ENCODE measurements at regions of chr1 and their contacts with region 1.

Region 1: GRCh38 chr1:27392096-27392777 is at the start of gene GPR3:
- DNase-seq: peak; percentile 98 to 100 (median 99)
- ATAC-seq: peak; percentile 94
- H3K4me3 ChIP-seq: peak within 1 kb of the TSS; percentile 96
- H3K27ac ChIP-seq: peak within 1 kb of the TSS; percentile 88
- H3K4me1 ChIP-seq: peaks cover 8 to 44% of the 10 kb centered on the region in 2 experiments
- H3K27me3 ChIP-seq: no peaks in the 10 kb centered on the region
- CTCF ChIP-seq: peak; percentile 68 to 89 (median 84)
- EP300 ChIP-seq: peak; percentile 54; the same call in 1 of the 2 replicates
- POLR2A ChIP-seq: peak; percentile 70
- RAD21 ChIP-seq: peak; percentile 45 to 60
- polyA plus RNA-seq, gene GPR3: 0.24 to 0.59 TPM

Region 2: DNA sequence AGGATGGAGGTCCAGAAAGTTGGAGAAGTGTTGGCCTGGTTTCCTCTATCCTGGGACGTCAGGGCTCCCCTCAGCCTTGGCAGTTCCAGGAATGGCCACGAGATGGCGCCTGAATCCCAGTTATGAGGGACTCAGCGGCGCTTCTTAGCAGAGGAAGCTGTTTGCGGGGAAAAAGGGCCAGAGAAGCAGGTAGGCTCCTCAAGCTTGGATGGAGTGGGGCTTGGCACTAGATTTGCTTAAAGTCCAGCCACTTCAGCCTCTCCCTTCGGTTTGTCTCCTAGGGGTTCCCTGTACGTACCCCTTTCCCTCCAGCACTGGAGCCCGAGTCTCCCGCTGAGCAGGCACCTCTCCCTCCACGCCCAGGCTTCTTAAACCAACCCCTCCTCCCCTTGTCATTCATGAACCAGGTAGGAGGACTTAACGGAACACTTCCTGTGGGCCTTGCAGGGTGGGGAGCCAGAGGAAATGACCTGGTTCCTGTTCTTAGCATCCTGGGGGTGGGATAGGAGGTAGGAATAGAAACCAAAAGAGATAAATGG is 347.6 kb before region 1 on chr1:
- CTCF ChIA-PET with region 1: interaction called, 12 read pairs
- POLR2A ChIA-PET with region 1: interaction called, 3 read pairs
- in situ Hi-C with region 1: no loop called
- intact Hi-C with region 1: loop called (anchors 5 kb)
- DNase-seq: peak; percentile 84 to 91 (median 89)
- ATAC-seq: peak; percentile 93
- H3K4me3 ChIP-seq: no peak overlapping the region
- H3K27ac ChIP-seq: no peak overlapping the region
- H3K4me1 ChIP-seq: peaks cover 3 to 5% of the 10 kb centered on the region in 2 experiments; a peak in 2 of 5 replicates
- H3K27me3 ChIP-seq: peaks cover 0 to 5% of the 10 kb centered on the region in 2 experiments; a peak in 1 of 5 replicates
- CTCF ChIP-seq: peak; percentile 97 to 99 (median 98)
- EP300 ChIP-seq: no peak
- POLR2A ChIP-seq: no peak
- RAD21 ChIP-seq: peak; percentile 97 to 100

Region 3: DNA sequence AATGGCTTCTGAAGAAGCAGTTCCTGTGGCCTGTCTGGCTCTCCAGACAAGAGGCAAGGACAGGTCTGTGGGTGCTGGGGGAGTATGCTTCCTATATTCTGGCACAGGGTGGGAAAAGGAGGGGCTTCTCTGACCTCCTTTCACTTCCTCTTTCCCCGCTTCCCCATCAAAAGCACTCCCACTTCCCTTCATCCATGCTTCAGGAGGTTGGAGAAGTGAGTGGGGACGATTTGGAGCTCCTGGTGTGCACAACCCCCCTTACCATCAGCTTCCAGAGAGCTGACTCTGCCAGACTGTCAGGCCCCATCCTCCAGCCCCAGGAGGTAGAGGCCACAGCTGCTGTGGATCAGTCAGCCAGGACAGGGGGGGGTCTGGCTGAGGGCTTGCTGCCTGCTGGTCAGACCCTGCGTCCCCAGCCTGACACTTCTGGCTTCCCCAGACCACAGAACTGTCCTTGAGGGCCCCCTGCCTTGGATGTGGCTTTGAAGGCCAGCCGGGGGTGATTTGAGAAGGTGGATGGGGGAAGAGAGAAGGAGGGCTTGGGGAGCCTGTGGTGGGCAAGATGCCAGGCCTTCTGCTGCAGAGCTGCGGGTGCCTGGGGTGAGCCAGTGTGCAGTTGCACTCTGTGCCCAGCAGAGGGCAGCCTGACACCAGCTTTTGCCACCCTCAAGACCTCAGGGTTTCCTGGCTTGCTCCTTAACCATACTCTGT is 91.7 kb before region 1 on chr1:
- CTCF ChIA-PET with region 1: interaction called, 49 read pairs
- POLR2A ChIA-PET with region 1: interaction called, 10 read pairs
- in situ Hi-C with region 1: loop called (anchors 5 kb)
- intact Hi-C with region 1: loop called (anchors 1 kb)
- DNase-seq: peak; percentile 88 to 93 (median 90)
- ATAC-seq: peak; percentile 95
- H3K4me3 ChIP-seq: no peak overlapping the region
- H3K27ac ChIP-seq: no peak overlapping the region
- H3K4me1 ChIP-seq: peaks cover 0 to 7% of the 10 kb centered on the region in 2 experiments; a peak in 2 of 5 replicates
- H3K27me3 ChIP-seq: no peaks in the 10 kb centered on the region
- CTCF ChIP-seq: peak; percentile 97 to 99 (median 98)
- EP300 ChIP-seq: no peak
- POLR2A ChIP-seq: no peak
- RAD21 ChIP-seq: peak; percentile 93 to 98

Region 4: DNA sequence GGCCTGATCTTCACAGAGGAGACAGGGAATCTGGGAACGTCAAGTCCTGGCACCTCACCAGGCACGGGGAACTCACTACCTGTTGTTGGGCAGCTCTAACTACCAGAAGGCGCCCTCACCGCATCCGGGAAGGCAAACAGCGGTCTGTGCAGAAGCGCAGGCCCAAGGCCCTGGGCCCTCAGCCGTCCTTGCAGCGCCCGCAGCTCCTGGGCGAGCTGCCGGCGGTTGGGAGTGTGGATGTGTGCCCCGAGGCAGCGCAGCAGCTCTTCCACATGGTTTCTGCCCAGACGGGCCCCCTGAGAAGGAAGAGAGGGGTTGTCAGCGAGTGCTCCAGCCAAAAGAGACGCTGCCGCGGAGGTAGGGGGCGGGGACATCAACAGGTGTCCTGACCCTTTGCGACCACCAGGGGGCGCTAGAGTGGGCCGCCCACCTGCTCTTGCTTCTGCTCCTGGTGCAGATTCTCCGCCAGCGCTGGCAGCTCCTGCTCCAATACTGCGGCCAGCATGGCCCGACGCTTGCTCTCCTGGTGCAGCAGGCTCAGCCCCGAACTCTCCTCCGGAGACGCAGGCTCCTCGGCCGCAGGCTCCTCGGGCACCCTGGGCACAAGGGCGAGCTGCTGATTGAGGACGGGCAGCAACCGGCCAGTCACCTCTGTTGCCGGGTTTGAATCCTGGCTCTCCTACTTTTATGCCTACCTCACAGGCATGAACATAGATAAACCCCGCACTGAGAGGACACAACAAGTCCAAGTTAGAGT is 34.8 kb before region 1 on chr1:
- CTCF ChIA-PET with region 1: interaction called, 5 read pairs
- POLR2A ChIA-PET with region 1: no interaction called
- in situ Hi-C with region 1: no loop called
- intact Hi-C with region 1: loop called (anchors 5 kb)
- DNase-seq: peak; percentile 85 to 94 (median 90)
- ATAC-seq: peak; percentile 90
- H3K4me3 ChIP-seq: no peak overlapping the region
- H3K27ac ChIP-seq: no peak overlapping the region
- H3K4me1 ChIP-seq: peaks cover 9 to 53% of the 10 kb centered on the region in 2 experiments
- H3K27me3 ChIP-seq: no peaks in the 10 kb centered on the region
- CTCF ChIP-seq: peak; percentile 95 to 98 (median 96)
- EP300 ChIP-seq: no peak
- POLR2A ChIP-seq: no peak
- RAD21 ChIP-seq: peak; percentile 61 to 84

Region 5: GRCh38 chr1:27372808-27373690 is 19.2 kb before region 1 on chr1:
- CTCF ChIA-PET with region 1: no interaction called
- POLR2A ChIA-PET with region 1: no interaction called
- in situ Hi-C with region 1: no loop called
- intact Hi-C with region 1: no loop called
- DNase-seq: peak; percentile 71 to 78 (median 72)
- ATAC-seq: peak; percentile 87
- H3K4me3 ChIP-seq: no peak overlapping the region
- H3K27ac ChIP-seq: no peak overlapping the region
- H3K4me1 ChIP-seq: peaks cover 7 to 26% of the 10 kb centered on the region in 2 experiments; a peak in 4 of 5 replicates
- H3K27me3 ChIP-seq: no peaks in the 10 kb centered on the region
- CTCF ChIP-seq: peak; percentile 60 to 81 (median 77)
- EP300 ChIP-seq: no peak
- POLR2A ChIP-seq: no peak
- RAD21 ChIP-seq: no peak

Region 6: GRCh38 chr1:27662707-27663393 is 270.6 kb after region 1 on chr1:
- CTCF ChIA-PET with region 1: interaction called, 3 read pairs
- POLR2A ChIA-PET with region 1: no interaction called
- in situ Hi-C with region 1: loop called (anchors 5 kb)
- intact Hi-C with region 1: loop called (anchors 2 kb)
- DNase-seq: peak; percentile 75 to 91 (median 82)
- ATAC-seq: peak; percentile 76
- H3K4me3 ChIP-seq: no peak overlapping the region
- H3K27ac ChIP-seq: peak overlapping the region; percentile 30; the same call in 2 of the 3 replicates
- H3K4me1 ChIP-seq: peaks cover 27 to 39% of the 10 kb centered on the region in 2 experiments
- H3K27me3 ChIP-seq: no peaks in the 10 kb centered on the region
- CTCF ChIP-seq: peak; percentile 92 to 97 (median 96)
- EP300 ChIP-seq: no peak
- POLR2A ChIP-seq: no peak
- RAD21 ChIP-seq: peak; percentile 98 to 99

Region 7: GRCh38 chr1:27992276-27992675 is 600.0 kb after region 1 on chr1:
- CTCF ChIA-PET with region 1: no interaction called
- POLR2A ChIA-PET with region 1: no interaction called
- in situ Hi-C with region 1: no loop called
- intact Hi-C with region 1: no loop called
- DNase-seq: no peak
- ATAC-seq: no peak
- H3K4me3 ChIP-seq: no peak overlapping the region
- H3K27ac ChIP-seq: no peak overlapping the region
- H3K4me1 ChIP-seq: no peaks in the 10 kb centered on the region
- H3K27me3 ChIP-seq: no peaks in the 10 kb centered on the region
- CTCF ChIP-seq: no peak
- EP300 ChIP-seq: no peak
- POLR2A ChIP-seq: no peak
- RAD21 ChIP-seq: no peak

Measured in K562 (cell line).